ENCODE measurements at regions of chr2 and their contacts with region 1.

Region 1: GRCh38 chr2:241637000-241637791 is at the starts of genes ATG4B and THAP4:
- DNase-seq: peak; percentile 76
- H3K4me3 Mint-ChIP-seq: peak within 1 kb of the TSS; percentile 84
- H3K27ac Mint-ChIP-seq: peak within 1 kb of the TSS; percentile 80
- H3K4me1 Mint-ChIP-seq: peaks cover 54% of the 10 kb centered on the region
- H3K27me3 Mint-ChIP-seq: no peaks in the 10 kb centered on the region
- total RNA-seq, gene ATG4B: 71.5 to 82.5 TPM
- total RNA-seq, gene THAP4: 36.4 to 38.8 TPM

Region 2: DNA sequence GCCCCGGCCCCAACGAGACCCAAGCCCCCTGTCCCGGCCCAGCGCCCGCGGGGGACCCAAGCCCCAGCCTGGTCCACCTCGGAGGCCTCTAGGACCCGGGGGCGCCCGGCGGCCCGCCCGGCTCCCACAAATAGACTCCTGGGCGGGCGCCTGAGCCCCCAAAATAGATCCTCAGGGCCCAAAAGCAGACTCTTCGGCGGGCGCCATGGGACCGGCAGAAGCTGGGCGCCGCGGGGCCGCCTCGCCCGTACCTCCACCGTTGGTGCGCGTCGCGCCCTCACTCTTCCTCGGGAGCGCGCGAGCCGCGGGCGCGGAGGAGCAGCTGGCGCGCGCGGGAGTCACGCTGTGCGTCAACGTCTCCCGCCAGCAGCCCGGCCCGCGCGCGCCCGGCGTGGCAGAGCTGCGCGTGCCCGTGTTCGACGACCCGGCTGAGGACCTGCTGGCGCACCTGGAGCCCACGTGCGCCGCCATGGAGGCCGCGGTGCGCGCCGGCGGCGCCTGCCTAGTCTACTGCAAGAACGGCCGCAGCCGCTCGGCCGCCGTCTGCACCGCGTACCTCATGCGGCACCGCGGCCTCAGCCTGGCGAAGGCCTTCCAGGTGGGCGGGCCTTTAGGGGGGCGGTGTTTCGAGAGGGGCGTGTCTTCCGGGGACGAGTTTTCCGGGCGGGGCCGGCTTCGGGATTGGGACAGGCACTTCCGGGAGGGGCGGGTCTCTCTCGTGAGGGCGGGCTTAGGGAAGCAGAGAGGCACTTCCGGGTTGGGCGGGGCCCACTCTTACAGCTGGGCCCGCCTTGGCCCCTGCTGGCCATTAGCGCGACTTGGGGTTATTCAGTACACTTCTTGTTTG is 1076.5 kb before region 1 on chr2:
- CTCF ChIA-PET with region 1: no interaction called
- intact Hi-C with region 1: loop called (anchors 10 kb)
- DNase-seq: peak; percentile 100
- H3K4me3 Mint-ChIP-seq: peak overlapping the region; percentile 94
- H3K27ac Mint-ChIP-seq: peak overlapping the region; percentile 99
- H3K4me1 Mint-ChIP-seq: peaks cover 69% of the 10 kb centered on the region
- H3K27me3 Mint-ChIP-seq: no peaks in the 10 kb centered on the region

Region 3: DNA sequence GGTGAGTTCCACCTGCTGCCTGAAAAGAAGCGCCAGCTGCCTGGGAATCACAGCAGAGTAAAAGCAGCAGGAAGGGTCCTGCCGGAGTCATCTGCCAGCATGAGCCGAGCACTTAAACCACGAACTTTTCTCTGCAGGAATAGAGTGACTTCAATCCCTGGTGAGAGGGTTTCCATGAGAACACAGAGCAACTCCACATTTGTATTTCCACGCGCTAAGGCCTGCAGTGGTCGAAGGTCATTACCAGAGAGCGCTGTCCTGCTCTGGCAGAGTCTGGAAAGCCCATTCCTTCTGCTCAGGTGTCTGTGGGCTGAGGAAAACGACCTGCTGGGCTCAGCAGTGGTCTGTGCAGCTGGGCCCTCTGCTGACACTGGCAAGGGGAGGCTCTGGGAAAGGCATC is 494.6 kb before region 1 on chr2:
- CTCF ChIA-PET with region 1: no interaction called
- intact Hi-C with region 1: no loop called
- DNase-seq: no peak
- H3K4me3 Mint-ChIP-seq: no peak overlapping the region
- H3K27ac Mint-ChIP-seq: no peak overlapping the region
- H3K4me1 Mint-ChIP-seq: peaks cover 4% of the 10 kb centered on the region
- H3K27me3 Mint-ChIP-seq: no peaks in the 10 kb centered on the region

Region 4: GRCh38 chr2:241355983-241356870 is 281.0 kb before region 1 on chr2 and contains the start of gene FARP2:
- CTCF ChIA-PET with region 1: no interaction called
- intact Hi-C with region 1: no loop called
- DNase-seq: peak; percentile 99
- H3K4me3 Mint-ChIP-seq: peak within 1 kb of the TSS; percentile 78
- H3K27ac Mint-ChIP-seq: peak within 1 kb of the TSS; percentile 76
- H3K4me1 Mint-ChIP-seq: peaks cover 27% of the 10 kb centered on the region
- H3K27me3 Mint-ChIP-seq: no peaks in the 10 kb centered on the region
- total RNA-seq, gene FARP2: 19.5 to 19.6 TPM

Region 5: GRCh38 chr2:241443486-241444223 is 193.5 kb before region 1 on chr2:
- CTCF ChIA-PET with region 1: no interaction called
- intact Hi-C with region 1: loop called (anchors 5 kb)
- DNase-seq: peak; percentile 98
- H3K4me3 Mint-ChIP-seq: no peak overlapping the region
- H3K27ac Mint-ChIP-seq: peak overlapping the region; percentile 22
- H3K4me1 Mint-ChIP-seq: peaks cover 24% of the 10 kb centered on the region
- H3K27me3 Mint-ChIP-seq: peaks cover 54% of the 10 kb centered on the region

Region 6: DNA sequence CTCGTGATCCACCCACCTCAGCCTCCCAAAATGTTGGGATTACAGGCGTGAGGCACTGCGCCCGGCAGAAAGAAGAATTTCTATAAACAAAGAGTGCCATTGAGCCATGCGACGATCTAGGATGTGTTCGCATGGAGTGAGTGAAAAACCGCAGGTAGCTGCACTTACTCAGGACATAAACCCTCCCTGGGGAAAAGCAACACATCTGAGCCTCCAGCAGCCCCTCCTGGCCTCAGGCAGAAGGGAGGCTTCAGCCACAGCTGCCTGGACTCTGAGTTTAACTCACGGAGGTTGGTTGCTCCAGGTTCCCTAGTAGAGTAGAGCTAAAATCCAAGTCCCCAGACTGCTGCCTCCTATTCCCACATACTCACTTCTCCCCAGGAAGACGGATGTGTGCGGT is 117.5 kb before region 1 on chr2:
- CTCF ChIA-PET with region 1: no interaction called
- intact Hi-C with region 1: no loop called
- DNase-seq: no peak
- H3K4me3 Mint-ChIP-seq: no peak overlapping the region
- H3K27ac Mint-ChIP-seq: no peak overlapping the region
- H3K4me1 Mint-ChIP-seq: peaks cover 12% of the 10 kb centered on the region
- H3K27me3 Mint-ChIP-seq: peaks cover 8% of the 10 kb centered on the region

Region 7: DNA sequence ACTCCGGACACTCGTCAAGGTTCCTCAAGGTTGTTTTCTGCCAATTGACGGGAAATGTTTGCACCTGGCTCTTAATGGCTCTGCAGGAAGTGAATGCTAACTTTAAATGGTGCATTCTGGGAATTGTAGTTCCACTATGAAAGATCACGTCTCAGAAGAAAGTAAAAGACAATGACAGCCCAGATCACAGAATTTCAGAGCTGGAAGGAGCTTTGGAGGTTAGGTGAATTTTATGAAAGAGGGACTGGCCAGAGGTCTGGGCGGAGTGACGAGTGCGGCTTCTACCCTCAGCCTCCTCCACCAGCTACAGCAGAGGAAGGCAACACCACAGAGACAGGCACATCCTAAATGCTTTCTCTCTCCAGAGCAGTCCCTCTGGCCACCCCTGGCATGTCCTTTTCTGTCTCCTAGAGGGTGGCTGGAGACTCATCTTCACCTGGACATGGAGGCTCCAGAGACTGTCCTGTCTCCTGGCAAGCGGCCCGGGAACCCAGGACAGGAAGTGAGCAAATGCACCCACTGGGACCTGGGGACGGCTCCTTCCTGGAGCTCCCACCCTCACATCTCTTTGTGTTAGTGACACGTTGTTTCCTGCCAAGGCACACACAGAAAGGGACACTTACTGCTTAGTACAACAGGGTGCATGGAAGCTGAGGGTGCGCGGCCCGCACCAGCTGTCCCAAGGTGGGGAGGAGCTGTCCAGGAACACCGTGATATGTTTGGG is 19.6 kb before region 1 on chr2:
- CTCF ChIA-PET with region 1: interaction called, 3 read pairs
- intact Hi-C with region 1: loop called (anchors 2 kb)
- DNase-seq: peak; percentile 61
- H3K4me3 Mint-ChIP-seq: peak overlapping the region; percentile 75
- H3K27ac Mint-ChIP-seq: peak overlapping the region; percentile 90
- H3K4me1 Mint-ChIP-seq: peaks cover 47% of the 10 kb centered on the region
- H3K27me3 Mint-ChIP-seq: no peaks in the 10 kb centered on the region

Region 8: DNA sequence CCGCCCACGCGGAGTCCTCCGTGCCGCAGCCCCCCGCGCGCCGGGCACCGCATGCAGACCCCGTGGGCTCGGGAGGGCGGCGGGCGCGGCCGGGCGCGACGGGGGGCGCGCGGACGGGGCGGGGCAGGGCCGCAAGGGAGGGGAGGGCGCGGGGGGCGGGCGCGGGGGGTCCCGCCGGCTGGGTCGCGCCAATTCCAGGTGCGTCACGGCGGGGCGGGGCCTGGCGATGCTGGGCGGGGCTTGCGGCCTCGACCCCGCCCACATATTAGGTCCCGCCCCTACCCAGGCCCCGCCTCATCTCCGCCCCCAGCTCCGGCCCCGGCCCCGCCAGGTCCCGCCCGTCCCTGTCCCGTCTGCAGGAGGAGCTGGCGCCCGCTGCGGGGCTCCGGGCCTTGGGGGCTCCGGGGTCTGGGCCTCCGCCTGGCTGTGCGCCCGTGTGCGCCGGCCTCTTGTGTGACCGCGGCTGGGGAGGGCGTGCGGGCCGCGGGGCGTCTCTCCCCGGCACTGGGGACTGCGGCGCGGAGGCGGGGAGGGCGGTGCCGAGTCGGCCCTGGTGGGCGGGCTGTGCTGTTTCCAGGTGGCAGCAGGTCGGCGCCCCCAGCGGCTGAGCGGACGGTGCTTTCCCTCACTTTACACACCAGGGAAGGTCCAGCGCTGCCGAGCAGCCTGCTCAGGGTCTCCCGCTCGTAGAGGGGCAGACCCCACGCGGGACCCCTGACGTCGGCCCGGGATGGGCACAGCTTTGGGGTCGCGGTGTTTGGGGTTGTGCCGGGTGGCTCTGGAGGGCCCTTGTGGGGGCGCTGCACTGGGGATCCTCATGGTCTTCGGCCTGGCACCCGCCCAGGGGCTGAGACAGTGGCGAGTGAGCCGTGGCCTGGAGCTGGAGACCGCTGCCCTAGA is 65.2 kb after region 1 on chr2:
- CTCF ChIA-PET with region 1: no interaction called
- intact Hi-C with region 1: loop called (anchors 1 kb)
- DNase-seq: peak; percentile 82
- H3K4me3 Mint-ChIP-seq: peak overlapping the region; percentile 82
- H3K27ac Mint-ChIP-seq: peak overlapping the region; percentile 61
- H3K4me1 Mint-ChIP-seq: peaks cover 24% of the 10 kb centered on the region
- H3K27me3 Mint-ChIP-seq: no peaks in the 10 kb centered on the region

Region 9: GRCh38 chr2:241865957-241866789 is 229.0 kb after region 1 on chr2:
- CTCF ChIA-PET with region 1: no interaction called
- intact Hi-C with region 1: no loop called
- DNase-seq: peak; percentile 63
- H3K4me3 Mint-ChIP-seq: no peak overlapping the region
- H3K27ac Mint-ChIP-seq: no peak overlapping the region
- H3K4me1 Mint-ChIP-seq: peaks cover 69% of the 10 kb centered on the region
- H3K27me3 Mint-ChIP-seq: peaks cover 14% of the 10 kb centered on the region

Measured in activated naive CD4-positive, alpha-beta T cell treated with anti-CD3 and anti-CD28 coated beads for 36 hours (primary cell).